ENCODE measurements at regions of chr15 and their contacts with region 1.

Region 1: GRCh38 chr15:92917606-92918407 is 17.7 kb downstream of the CHD2 start:
- DNase-seq: peak; percentile 96
- ATAC-seq: peak; percentile 88
- H3K4me3 ChIP-seq: no peak overlapping the region
- H3K27ac ChIP-seq: peak overlapping the region in 1 of 2 donors; percentile 58
- H3K4me1 ChIP-seq: peaks cover 9 to 29% of the 10 kb centered on the region in 2 donors
- H3K27me3 ChIP-seq: no peaks in the 10 kb centered on the region

Region 2: GRCh38 chr15:92803847-92804609 is 113.8 kb before region 1 on chr15:
- intact Hi-C with region 1: loop called (anchors 1 to 5 kb)
- DNase-seq: peak; percentile 91 to 93
- ATAC-seq: peak; percentile 81
- H3K4me3 ChIP-seq: no peak overlapping the region
- H3K27ac ChIP-seq: peak overlapping the region; percentile 52 to 97
- H3K4me1 ChIP-seq: peaks cover 0 to 2% of the 10 kb centered on the region in 2 donors
- H3K27me3 ChIP-seq: no peaks in the 10 kb centered on the region

Region 3: GRCh38 chr15:92808978-92809879 is 108.6 kb before region 1 on chr15:
- intact Hi-C with region 1: loop called (anchors 1 to 5 kb)
- DNase-seq: peak; percentile 99
- ATAC-seq: peak; percentile 96
- H3K4me3 ChIP-seq: peak overlapping the region; percentile 20 to 22
- H3K27ac ChIP-seq: peak overlapping the region; percentile 92 to 98
- H3K4me1 ChIP-seq: no peaks in the 10 kb centered on the region
- H3K27me3 ChIP-seq: no peaks in the 10 kb centered on the region

Region 4: GRCh38 chr15:92881802-92882696 is 35.8 kb before region 1 on chr15:
- intact Hi-C with region 1: loop called (anchors 2 to 5 kb)
- DNase-seq: peak; percentile 99
- ATAC-seq: peak; percentile 95
- H3K4me3 ChIP-seq: peak overlapping the region; percentile 37 to 75
- H3K27ac ChIP-seq: peak overlapping the region; percentile 94 to 99
- H3K4me1 ChIP-seq: no peaks in the 10 kb centered on the region
- H3K27me3 ChIP-seq: no peaks in the 10 kb centered on the region

Region 5: GRCh38 chr15:92958105-92958504 is 40.3 kb after region 1 on chr15:
- intact Hi-C with region 1: loop called in 1 of 2 experiments (anchors 5 kb)
- DNase-seq: no peak
- ATAC-seq: no peak
- H3K4me3 ChIP-seq: no peak overlapping the region
- H3K27ac ChIP-seq: no peak overlapping the region
- H3K4me1 ChIP-seq: no peaks in the 10 kb centered on the region
- H3K27me3 ChIP-seq: no peaks in the 10 kb centered on the region

Region 6: DNA sequence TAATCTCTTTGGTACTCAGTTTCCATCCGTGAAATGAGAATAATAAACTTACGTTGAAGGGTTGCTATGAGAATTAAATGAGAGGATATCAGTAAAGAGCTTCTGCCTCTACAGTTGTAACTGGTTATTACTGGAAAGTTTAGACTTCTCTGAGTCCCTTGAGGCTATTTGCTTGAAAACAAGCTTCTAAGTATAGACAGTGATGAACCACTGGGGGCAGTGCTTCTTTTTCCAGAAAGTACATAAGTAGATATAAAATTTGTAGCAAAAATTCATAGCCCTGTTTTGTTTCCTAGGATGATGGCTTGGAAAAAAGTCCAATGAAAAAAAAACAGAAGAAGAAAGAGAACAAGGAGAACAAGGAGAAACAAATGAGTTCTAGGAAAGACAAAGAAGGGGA is 84.1 kb after region 1 on chr15:
- intact Hi-C with region 1: loop called in 1 of 2 experiments (anchors 5 kb)
- DNase-seq: no peak
- ATAC-seq: no peak
- H3K4me3 ChIP-seq: no peak overlapping the region
- H3K27ac ChIP-seq: no peak overlapping the region
- H3K4me1 ChIP-seq: no peaks in the 10 kb centered on the region
- H3K27me3 ChIP-seq: no peaks in the 10 kb centered on the region

Region 7: DNA sequence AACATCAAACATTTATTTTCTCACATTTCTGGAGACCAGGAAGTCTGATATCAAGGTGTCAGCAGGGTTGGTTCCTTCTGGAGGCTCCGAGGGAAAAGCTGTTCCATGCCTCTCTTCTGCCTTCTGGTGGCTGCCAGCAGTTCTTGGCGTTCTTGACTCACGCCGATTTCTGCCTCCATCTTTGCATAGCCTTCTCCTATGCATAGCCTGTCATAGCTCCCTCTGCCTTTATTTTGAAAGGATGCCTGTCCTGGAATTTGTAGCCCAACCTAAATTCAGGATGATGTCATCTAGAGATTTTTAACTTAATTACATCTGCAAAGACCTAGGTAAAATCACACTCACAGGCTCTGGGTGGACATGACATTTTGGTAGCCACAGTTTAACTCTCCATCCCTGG is 100.8 kb after region 1 on chr15:
- intact Hi-C with region 1: loop called in 1 of 2 experiments (anchors 5 kb)
- DNase-seq: no peak
- ATAC-seq: no peak
- H3K4me3 ChIP-seq: no peak overlapping the region
- H3K27ac ChIP-seq: no peak overlapping the region
- H3K4me1 ChIP-seq: no peaks in the 10 kb centered on the region
- H3K27me3 ChIP-seq: no peaks in the 10 kb centered on the region

Region 8: DNA sequence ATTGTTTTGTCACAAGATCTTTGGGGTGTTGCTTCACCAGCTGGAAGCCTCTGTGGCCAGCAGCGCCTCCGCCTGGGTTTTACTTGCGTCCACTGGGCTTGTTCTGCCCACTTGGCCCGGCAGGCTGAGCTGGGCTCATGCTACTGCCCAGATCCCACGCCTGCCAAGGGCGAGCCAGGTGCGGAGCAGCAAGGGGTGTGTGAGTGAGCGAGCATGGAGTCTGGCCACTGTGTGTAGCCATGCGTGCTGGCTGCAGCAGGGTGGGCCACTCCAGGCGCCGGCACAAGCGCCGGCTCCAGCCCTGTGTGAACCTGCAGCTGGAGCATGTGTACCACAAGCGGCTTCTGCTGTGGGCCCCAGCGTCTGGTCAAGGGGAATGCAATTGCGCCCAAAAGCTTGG is 587.7 kb after region 1 on chr15:
- intact Hi-C with region 1: no loop called
- DNase-seq: no peak
- ATAC-seq: no peak
- H3K4me3 ChIP-seq: no peak overlapping the region
- H3K27ac ChIP-seq: no peak overlapping the region
- H3K4me1 ChIP-seq: no peaks in the 10 kb centered on the region
- H3K27me3 ChIP-seq: no peaks in the 10 kb centered on the region

Measured in aorta (tissue), 5 donors.